Gastrocnemius medialis (tissue), 4 donors: ENCODE measurements at regions of chr1 and their contacts with region 1.

Region 1: GRCh38 chr1:244792188-244792850 is 43.1 kb upstream of the COX20 start:
- DNase-seq: no peak
- ATAC-seq: no peak
- H3K4me3 ChIP-seq: no peak overlapping the region
- H3K27ac ChIP-seq: no peak overlapping the region
- H3K4me1 ChIP-seq: no peaks in the 10 kb centered on the region
- H3K27me3 ChIP-seq: no peaks in the 10 kb centered on the region
- CTCF ChIP-seq: no peak
- POLR2A ChIP-seq: no peak

Region 2: DNA sequence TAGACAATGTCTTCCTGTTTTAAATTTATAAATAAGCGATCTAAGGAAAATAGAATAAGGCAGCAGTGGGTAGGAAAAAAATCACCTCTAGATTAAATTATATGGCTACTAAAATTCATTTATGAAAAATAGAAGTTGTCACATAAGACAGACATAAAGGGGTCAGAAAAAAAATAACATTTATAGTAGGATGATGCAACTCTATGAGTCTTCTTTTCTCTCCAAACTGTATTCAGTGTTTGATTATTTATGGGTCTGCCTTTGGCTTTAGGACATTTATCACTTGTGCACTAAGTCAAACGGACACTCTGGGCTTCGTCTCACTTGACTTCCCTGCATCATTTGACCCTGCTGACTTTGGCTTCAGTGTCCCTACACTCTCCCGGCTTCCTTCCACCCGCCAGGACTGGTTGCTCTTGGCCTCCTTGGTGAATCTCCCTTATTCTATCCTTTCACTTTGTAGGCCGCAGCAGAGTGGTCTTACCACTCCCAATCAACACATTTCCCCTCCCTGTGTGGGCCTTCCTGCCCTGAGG is 186.4 kb before region 1 on chr1:
- in situ Hi-C with region 1: loop called (anchors 5 kb)
- intact Hi-C with region 1: loop called (anchors 1 kb)
- DNase-seq: no peak
- ATAC-seq: no peak
- H3K4me3 ChIP-seq: no peak overlapping the region
- H3K27ac ChIP-seq: no peak overlapping the region
- H3K4me1 ChIP-seq: no peaks in the 10 kb centered on the region
- H3K27me3 ChIP-seq: no peaks in the 10 kb centered on the region
- CTCF ChIP-seq: no peak
- POLR2A ChIP-seq: no peak